Activated CD8-positive, alpha-beta T cell treated with anti-CD3 and anti-CD28 coated beads for 36 hours (primary cell): ENCODE measurements at regions of chr3 and their contacts with region 1.

Region 1: GRCh38 chr3:177144923-177145780 is 52.1 kb downstream of the TBL1XR1 start:
- DNase-seq: no peak
- ATAC-seq: peak; percentile 58
- H3K4me3 Mint-ChIP-seq: peak overlapping the region; percentile 34
- H3K27ac Mint-ChIP-seq: peak overlapping the region; percentile 85
- H3K4me1 Mint-ChIP-seq: peaks cover 77% of the 10 kb centered on the region
- H3K27me3 Mint-ChIP-seq: no peaks in the 10 kb centered on the region
- CTCF ChIP-seq: no peak

Region 2: GRCh38 chr3:177190756-177191681 is 45.9 kb after region 1 on chr3:
- CTCF ChIA-PET with region 1: interaction called, 3 read pairs
- POLR2A ChIA-PET with region 1: interaction called, 6 read pairs
- intact Hi-C with region 1: loop called (anchors 5 kb)
- DNase-seq: no peak
- ATAC-seq: no peak
- H3K4me3 Mint-ChIP-seq: peak overlapping the region; percentile 3
- H3K27ac Mint-ChIP-seq: peak overlapping the region; percentile 17
- H3K4me1 Mint-ChIP-seq: peaks cover 48% of the 10 kb centered on the region
- H3K27me3 Mint-ChIP-seq: no peaks in the 10 kb centered on the region
- CTCF ChIP-seq: no peak